ENCODE measurements at regions of chr17 and their contacts with region 1.

Region 1: DNA sequence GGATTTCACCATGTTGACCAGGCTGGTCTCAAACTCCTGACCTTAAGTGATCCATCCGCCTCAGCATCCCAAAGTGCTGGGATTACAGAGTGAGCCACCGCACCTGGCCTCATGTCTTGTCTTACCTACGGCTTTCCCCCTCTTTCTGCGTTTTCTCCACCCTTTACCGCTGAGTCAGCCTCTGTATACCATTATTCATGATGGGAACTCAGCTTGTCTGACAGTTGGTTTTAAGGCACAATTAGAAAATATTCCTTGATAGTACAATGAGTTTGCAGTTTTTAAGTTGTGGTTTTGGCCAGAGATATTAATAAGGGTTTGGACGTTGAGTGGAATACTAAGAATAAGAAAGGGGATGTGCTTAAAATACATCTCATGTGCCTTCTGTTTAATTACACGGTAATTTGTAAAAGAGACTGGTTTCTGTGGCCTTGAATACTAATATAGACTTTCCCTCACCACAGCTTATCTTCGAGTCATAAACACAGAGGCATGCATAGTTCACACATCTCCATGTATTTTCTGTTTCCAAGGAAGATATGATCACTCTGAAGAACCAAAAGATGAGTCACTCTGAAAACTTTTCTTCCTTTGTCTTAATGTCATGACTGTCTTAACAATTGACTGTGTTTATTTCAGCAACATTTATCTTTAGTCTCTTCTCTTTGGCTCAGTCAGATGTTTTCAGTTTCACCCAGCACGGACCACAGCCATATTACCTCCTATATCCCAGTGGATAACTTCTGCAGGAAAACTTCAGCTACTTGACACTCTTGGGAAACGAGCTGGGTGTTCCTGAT is 54.4 kb downstream of the PITPNC1 start:
- DNase-seq: no peak
- ATAC-seq: no peak
- H3K4me3 ChIP-seq: no peak overlapping the region
- H3K4me3 Mint-ChIP-seq: no peak overlapping the region
- H3K27ac ChIP-seq: no peak overlapping the region
- H3K27ac Mint-ChIP-seq: no peak overlapping the region
- H3K4me1 ChIP-seq: peaks cover 0 to 8% of the 10 kb centered on the region in 2 donors
- H3K4me1 Mint-ChIP-seq: peaks cover 11% of the 10 kb centered on the region
- H3K27me3 ChIP-seq: no peaks in the 10 kb centered on the region
- H3K27me3 Mint-ChIP-seq: no peaks in the 10 kb centered on the region
- CTCF ChIP-seq: no peak

Region 2: GRCh38 chr17:67238991-67239390 is 192.5 kb before region 1 on chr17:
- CTCF ChIA-PET with region 1: no interaction called
- POLR2A ChIA-PET with region 1: interaction called, 15 read pairs
- intact Hi-C with region 1: no loop called
- DNase-seq: no peak
- ATAC-seq: no peak
- H3K4me3 ChIP-seq: no peak overlapping the region
- H3K4me3 Mint-ChIP-seq: no peak overlapping the region
- H3K27ac ChIP-seq: no peak overlapping the region
- H3K27ac Mint-ChIP-seq: no peak overlapping the region
- H3K4me1 ChIP-seq: peaks cover 5 to 15% of the 10 kb centered on the region in 2 donors
- H3K4me1 Mint-ChIP-seq: peaks cover 36% of the 10 kb centered on the region
- H3K27me3 ChIP-seq: no peaks in the 10 kb centered on the region
- H3K27me3 Mint-ChIP-seq: no peaks in the 10 kb centered on the region
- CTCF ChIP-seq: no peak

Region 3: DNA sequence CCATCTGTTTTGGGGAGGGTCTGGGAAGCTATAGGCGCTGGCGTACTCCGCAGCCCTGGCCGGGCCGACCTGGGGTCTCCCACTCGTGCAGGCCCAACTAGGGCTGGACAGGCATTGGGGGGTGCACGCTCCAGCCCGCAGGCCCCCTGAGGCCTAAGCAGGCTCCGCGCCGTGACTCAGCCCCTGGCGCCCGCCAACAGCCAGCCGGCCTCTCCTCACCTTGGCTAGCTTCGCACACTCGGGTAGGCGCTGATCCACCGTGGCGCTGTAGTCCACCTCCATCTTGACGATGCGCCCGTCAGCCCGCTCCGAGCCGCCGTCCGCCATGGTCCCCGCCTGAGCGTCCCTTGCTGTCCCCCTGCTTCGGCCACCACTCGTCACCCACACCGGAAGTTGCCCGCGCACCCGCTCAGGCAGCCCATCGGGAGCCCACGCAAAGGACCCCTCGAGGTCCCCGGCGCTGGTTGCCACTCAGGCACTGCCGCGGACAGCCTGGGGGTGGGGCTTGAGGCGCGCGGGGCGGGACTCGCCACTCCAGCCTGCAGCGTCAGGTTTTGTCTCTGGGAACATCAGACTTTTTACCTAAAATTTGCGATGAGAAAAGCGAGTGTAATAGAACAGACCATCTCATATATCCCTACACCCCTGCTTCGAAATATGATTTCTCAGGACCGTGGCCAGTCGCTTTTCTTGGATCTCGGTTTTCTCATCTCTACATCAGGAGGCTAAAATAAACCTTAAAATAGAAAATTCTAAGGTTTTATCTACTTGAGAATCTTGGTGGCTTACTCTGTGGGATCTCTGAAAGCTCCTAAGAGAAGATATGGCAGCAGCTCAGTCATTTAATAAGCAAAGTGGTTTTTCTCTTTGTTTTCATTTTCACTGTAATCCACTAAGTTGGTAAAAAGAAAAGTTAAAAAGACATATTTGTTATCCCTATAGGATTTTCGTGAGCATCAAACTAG is 65.0 kb before region 1 on chr17 and contains the start of gene PSMD12:
- CTCF ChIA-PET with region 1: no interaction called
- POLR2A ChIA-PET with region 1: no interaction called
- intact Hi-C with region 1: no loop called
- DNase-seq: peak; percentile 92
- ATAC-seq: peak; percentile 99
- H3K4me3 ChIP-seq: peak within 1 kb of the TSS; percentile 83 to 97 (median 94)
- H3K4me3 Mint-ChIP-seq: peak within 1 kb of the TSS; percentile 98
- H3K27ac ChIP-seq: peak within 1 kb of the TSS; percentile 85
- H3K27ac Mint-ChIP-seq: peak within 1 kb of the TSS; percentile 97
- H3K4me1 ChIP-seq: peaks cover 21 to 22% of the 10 kb centered on the region in 2 donors
- H3K4me1 Mint-ChIP-seq: peaks cover 38% of the 10 kb centered on the region
- H3K27me3 ChIP-seq: no peaks in the 10 kb centered on the region
- H3K27me3 Mint-ChIP-seq: no peaks in the 10 kb centered on the region
- CTCF ChIP-seq: no peak
- total RNA-seq, gene PSMD12: 36.5 and 36.7 TPM in 2 replicates

Region 4: DNA sequence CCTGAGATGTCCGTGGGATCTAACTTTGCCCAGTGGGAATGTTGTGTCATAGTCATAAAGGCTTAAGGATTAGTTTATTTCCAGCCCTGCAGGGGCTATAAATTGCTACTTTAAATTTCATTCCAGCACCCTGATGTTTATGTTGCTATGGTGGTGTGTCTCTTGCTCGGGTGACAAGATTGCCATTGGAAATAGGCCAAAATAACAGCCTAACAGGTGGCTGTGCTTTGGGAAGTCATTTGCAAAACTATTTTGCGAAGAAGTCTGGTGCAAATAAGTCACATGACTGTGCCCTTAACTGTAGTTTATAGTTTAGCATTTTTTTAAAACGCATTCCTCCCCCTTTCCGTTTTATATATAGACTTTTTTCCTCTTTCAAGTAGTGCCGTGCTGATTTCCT is 31.3 kb before region 1 on chr17:
- CTCF ChIA-PET with region 1: no interaction called
- POLR2A ChIA-PET with region 1: no interaction called
- intact Hi-C with region 1: no loop called
- DNase-seq: no peak
- ATAC-seq: no peak
- H3K4me3 ChIP-seq: no peak overlapping the region
- H3K4me3 Mint-ChIP-seq: no peak overlapping the region
- H3K27ac ChIP-seq: no peak overlapping the region
- H3K27ac Mint-ChIP-seq: no peak overlapping the region
- H3K4me1 ChIP-seq: peaks cover 8 to 17% of the 10 kb centered on the region in 2 donors
- H3K4me1 Mint-ChIP-seq: peaks cover 26% of the 10 kb centered on the region
- H3K27me3 ChIP-seq: no peaks in the 10 kb centered on the region
- H3K27me3 Mint-ChIP-seq: no peaks in the 10 kb centered on the region
- CTCF ChIP-seq: no peak

Region 5: DNA sequence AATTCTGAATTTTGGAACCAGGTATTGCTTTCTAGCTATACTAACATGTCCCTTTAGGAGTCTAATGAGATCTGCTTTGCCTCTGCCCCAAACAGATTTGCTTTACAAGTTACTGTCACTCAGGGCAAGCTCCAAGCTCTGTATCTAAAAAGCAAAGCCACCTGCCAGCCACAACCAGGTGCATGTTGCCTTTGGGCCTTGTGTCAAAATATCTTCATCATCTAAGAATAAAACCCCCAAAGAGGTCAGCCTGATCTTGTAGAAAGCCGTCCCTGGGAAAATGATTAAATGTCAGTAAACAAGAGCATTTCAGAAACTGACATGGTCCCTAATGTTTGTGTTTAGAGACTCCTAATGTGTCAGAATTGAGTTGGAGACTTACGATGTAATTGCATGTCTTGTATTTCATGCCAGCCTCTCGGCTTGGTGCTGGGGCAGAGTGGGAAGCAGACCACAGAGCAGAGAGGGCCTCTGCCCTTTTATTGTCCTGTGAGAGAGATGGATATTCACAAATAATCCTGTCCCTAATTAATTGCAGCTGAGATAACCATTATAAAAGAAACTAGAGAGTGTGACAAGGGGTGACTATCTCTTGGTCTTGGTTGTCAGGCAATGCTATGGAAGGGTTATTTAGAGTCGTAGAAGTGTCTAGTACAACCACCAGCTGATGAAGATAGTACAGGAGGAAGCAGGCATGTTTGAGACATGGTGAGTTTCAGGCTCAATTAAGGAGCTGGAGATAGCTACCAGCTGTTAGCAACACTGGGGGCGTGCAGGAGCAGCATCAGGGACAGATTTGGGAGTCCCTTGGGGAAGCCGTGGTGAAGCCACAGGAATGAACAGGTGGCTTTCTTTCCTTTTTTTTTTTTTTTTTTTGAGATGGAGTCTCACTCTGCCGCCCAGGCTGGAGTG is 36.4 kb after region 1 on chr17:
- CTCF ChIA-PET with region 1: no interaction called
- POLR2A ChIA-PET with region 1: no interaction called
- intact Hi-C with region 1: no loop called
- DNase-seq: no peak
- ATAC-seq: no peak
- H3K4me3 ChIP-seq: no peak overlapping the region
- H3K4me3 Mint-ChIP-seq: peak overlapping the region; percentile 8
- H3K27ac ChIP-seq: no peak overlapping the region
- H3K27ac Mint-ChIP-seq: no peak overlapping the region
- H3K4me1 ChIP-seq: no peaks in the 10 kb centered on the region
- H3K4me1 Mint-ChIP-seq: peaks cover 13% of the 10 kb centered on the region
- H3K27me3 ChIP-seq: no peaks in the 10 kb centered on the region
- H3K27me3 Mint-ChIP-seq: no peaks in the 10 kb centered on the region
- CTCF ChIP-seq: no peak

Region 6: GRCh38 chr17:67503184-67503583 is 71.7 kb after region 1 on chr17:
- CTCF ChIA-PET with region 1: no interaction called
- POLR2A ChIA-PET with region 1: no interaction called
- intact Hi-C with region 1: no loop called
- DNase-seq: no peak
- ATAC-seq: no peak
- H3K4me3 ChIP-seq: no peak overlapping the region
- H3K4me3 Mint-ChIP-seq: no peak overlapping the region
- H3K27ac ChIP-seq: no peak overlapping the region
- H3K27ac Mint-ChIP-seq: no peak overlapping the region
- H3K4me1 ChIP-seq: no peaks in the 10 kb centered on the region
- H3K4me1 Mint-ChIP-seq: no peaks in the 10 kb centered on the region
- H3K27me3 ChIP-seq: no peaks in the 10 kb centered on the region
- H3K27me3 Mint-ChIP-seq: no peaks in the 10 kb centered on the region
- CTCF ChIP-seq: no peak